Sigmoid colon (tissue), 7 donors: ENCODE measurements at regions of chr14 and their contacts with region 1.

Region 1: DNA sequence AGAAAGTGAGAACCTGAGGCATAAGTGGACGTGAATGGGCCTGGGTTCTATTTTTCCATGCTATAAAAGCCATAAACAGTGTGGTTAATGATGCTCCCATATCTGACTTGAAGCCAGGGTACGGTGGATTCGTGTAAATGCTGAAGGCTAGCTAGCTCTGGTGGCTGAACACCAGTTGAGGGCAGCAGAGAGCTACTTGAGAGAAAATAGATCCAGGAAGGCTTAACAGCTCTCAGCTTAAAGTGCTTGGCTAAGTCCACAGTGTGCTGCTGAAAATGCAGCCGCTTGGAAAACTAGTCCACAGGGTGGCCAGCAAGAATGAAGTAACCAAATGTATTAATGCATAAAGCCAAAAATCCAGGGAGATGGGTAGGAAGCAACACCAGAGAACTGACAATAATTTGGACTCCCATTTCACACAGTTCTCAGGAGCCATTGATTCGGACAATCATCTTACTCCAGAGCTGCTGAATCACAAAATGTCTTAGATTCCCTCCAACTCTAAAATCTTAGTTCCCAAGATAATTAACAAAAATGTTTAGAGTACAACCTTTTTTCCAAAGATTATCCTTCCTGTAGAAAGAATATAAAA is 15.0 kb upstream of the FOXG1 start:
- DNase-seq: no peak
- H3K4me3 ChIP-seq: no peak overlapping the region
- H3K27ac ChIP-seq: no peak overlapping the region
- H3K4me1 ChIP-seq: peaks cover 0 to 4% (median 0%) of the 10 kb centered on the region in 4 donors
- H3K27me3 ChIP-seq: peaks cover 5 to 68% (median 21%) of the 10 kb centered on the region in 3 donors
- CTCF ChIP-seq: peak in 2 of 4 experiments; percentile 21 to 43
- EP300 ChIP-seq: no peak
- POLR2A ChIP-seq: no peak

Region 2: DNA sequence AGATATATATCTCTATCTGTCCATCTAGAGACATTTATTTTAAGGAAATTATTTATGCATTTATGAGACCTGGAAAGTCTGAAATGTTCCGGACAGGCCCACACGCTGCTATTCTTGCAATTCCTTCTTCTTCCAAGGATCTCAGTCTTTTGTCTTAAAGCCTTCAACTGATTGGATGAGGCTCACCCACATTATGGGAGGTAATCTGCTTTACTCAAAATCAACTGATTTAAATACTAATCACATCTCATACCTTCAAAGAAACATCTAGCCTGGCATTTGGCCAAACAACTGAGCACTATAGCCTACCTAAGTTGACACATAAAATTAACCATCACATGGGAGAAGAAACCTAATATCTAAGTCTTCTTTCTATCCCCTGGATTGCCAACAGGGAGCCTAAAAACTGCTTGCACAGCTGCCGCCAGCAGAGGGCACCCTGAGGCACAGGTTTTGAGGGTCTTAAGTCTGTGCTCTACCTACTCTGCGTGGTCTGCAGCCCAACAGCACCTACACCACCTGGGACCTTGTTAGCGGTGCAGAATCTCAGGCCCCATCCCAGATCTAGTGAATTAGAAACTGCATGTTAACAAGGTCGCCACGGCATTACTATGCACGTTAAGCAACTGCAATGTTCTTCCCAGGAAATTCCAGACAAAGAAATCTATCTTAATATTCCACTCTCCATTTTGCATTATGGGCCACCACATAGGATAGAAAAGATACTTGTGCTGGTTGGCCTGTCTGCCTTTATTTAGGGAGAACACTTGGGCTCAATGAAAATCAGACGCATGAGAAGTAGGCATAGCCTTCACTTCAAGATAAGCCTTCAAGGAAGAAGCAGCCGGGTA is 264.7 kb after region 1 on chr14:
- intact Hi-C with region 1: no loop called
- DNase-seq: no peak
- H3K4me3 ChIP-seq: no peak overlapping the region
- H3K27ac ChIP-seq: no peak overlapping the region
- H3K4me1 ChIP-seq: no peaks in the 10 kb centered on the region
- H3K27me3 ChIP-seq: no peaks in the 10 kb centered on the region
- CTCF ChIP-seq: peak in 1 of 4 experiments; percentile 21
- EP300 ChIP-seq: no peak
- POLR2A ChIP-seq: no peak

Region 3: GRCh38 chr14:29536886-29537511 is 785.4 kb after region 1 on chr14:
- intact Hi-C with region 1: loop called (anchors 5 kb)
- DNase-seq: no peak
- H3K4me3 ChIP-seq: no peak overlapping the region
- H3K27ac ChIP-seq: no peak overlapping the region
- H3K4me1 ChIP-seq: no peaks in the 10 kb centered on the region
- H3K27me3 ChIP-seq: no peaks in the 10 kb centered on the region
- CTCF ChIP-seq: peak in 1 of 4 experiments; percentile 30
- EP300 ChIP-seq: no peak
- POLR2A ChIP-seq: no peak

Region 4: DNA sequence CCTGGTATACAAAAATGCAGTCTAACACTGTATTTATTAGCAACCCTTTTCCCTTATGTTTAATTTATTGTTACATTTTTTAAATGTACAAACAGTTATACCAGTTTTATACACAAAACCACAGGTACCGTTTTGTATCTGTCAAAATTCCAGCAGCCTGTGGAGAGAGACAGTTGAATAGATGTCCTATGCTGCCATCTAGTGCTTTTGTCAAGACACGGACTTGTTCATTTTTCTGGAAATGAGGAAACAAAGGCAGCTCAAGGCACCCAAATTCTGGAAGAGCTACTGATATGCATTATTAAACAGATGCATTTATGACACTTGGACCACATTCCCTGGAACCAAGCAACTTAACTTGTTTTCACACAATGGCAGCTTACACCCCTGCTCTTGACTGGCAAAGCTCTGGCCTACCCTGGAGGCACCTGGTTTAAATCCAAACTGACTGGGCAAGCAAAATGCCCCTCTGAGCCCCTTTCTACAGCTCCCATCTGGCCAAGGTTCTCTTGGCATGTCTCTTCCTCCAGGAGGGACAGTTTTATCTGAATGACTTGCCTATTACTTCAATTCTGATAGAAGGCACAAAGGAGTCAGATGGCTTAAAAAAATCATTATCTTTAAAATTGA is 1463.0 kb after region 1 on chr14:
- intact Hi-C with region 1: loop called (anchors 10 kb)
- DNase-seq: no peak
- H3K4me3 ChIP-seq: no peak overlapping the region
- H3K27ac ChIP-seq: no peak overlapping the region
- H3K4me1 ChIP-seq: peaks cover 0 to 7% (median 0%) of the 10 kb centered on the region in 4 donors
- H3K27me3 ChIP-seq: no peaks in the 10 kb centered on the region
- CTCF ChIP-seq: peak; percentile 25 to 55 (median 40)
- EP300 ChIP-seq: no peak
- POLR2A ChIP-seq: no peak

Region 5: DNA sequence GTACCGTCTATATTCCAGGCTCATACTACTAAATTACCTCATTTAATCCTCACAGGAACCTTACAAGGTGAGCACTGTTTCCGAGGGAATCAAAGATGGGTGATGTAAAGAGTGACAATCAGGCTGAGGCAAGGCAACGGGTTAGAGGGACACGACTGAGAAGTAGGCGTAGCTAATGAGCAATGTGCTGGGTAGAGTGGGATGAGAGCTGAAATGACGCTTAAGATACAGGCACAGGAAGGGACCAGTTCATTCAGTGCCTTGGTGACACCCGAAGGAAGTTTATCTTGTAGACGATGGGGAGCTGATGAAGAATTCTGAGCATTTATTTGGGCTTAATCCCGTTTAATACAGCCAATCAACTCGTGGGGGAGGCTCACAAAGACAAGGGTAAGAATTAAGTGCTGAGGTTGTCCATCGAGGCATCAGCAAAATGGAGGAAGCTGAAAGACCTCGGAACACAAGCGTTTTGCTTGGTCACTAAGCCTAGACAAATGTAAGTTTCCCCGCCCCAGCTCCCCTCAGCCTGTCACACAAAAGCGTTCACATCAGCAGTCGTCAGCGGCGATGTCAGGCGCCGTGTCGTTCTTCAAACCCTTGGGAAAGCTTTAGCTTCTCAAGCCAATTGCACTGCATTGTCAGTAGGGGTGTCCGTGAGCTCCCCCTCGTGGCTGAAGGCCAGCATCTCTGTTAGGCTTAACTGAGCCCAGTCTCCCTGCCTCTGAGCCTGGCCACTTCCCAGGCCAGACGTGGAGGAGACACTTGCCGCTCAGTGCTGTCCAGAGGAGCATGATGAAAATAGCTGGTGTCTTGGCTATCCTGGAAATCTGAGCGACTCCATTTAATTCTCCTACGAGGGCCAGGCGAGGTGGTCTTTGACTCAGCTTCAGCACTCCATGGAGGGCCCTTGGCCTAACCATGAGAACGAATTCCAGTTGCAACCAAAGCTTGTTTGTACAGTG is 1518.9 kb after region 1 on chr14:
- intact Hi-C with region 1: loop called (anchors 10 kb)
- DNase-seq: peak; percentile 87
- H3K4me3 ChIP-seq: peak overlapping the region in 2 of 4 donors; percentile 18 to 19
- H3K27ac ChIP-seq: no peak overlapping the region
- H3K4me1 ChIP-seq: peaks cover 0 to 9% (median 0%) of the 10 kb centered on the region in 4 donors
- H3K27me3 ChIP-seq: no peaks in the 10 kb centered on the region
- CTCF ChIP-seq: peak; percentile 29 to 78 (median 48)
- EP300 ChIP-seq: no peak
- POLR2A ChIP-seq: no peak